MCF 10A (cell line): ENCODE measurements at regions of chr19 and their contacts with region 1.

Region 1: GRCh38 chr19:49127674-49128544 is 8.6 kb downstream of the PPFIA3 start:
- DNase-seq: peak; percentile 99
- H3K4me3 Mint-ChIP-seq: peak overlapping the region; percentile 70
- H3K27ac Mint-ChIP-seq: peak overlapping the region; percentile 25
- H3K4me1 Mint-ChIP-seq: peaks cover 10% of the 10 kb centered on the region
- H3K27me3 Mint-ChIP-seq: no peaks in the 10 kb centered on the region
- CTCF ChIP-seq: no peak

Region 2: DNA sequence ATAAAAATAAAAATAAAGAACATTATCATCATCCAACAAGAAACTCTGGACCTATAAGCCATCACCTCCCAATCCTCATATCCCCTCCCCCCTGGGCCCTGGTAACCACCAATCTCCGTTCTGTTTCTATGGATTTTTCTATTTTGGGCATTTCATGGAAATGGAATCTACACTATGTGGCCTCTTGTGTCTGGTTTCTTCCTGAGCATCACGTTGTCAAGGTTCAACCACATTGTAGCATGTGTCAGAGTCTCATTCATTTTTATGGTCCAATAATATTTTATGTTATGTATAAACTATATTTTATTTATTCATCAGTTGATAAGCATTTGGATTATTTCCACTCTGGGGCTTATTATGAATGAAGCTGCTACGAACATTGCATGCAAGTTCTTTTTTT is 549.0 kb before region 1 on chr19:
- CTCF ChIA-PET with region 1: no interaction called
- POLR2A ChIA-PET with region 1: no interaction called
- intact Hi-C with region 1: no loop called
- DNase-seq: no peak
- H3K4me3 Mint-ChIP-seq: no peak overlapping the region
- H3K27ac Mint-ChIP-seq: no peak overlapping the region
- H3K4me1 Mint-ChIP-seq: peaks cover 6% of the 10 kb centered on the region
- H3K27me3 Mint-ChIP-seq: no peaks in the 10 kb centered on the region
- CTCF ChIP-seq: no peak

Region 3: DNA sequence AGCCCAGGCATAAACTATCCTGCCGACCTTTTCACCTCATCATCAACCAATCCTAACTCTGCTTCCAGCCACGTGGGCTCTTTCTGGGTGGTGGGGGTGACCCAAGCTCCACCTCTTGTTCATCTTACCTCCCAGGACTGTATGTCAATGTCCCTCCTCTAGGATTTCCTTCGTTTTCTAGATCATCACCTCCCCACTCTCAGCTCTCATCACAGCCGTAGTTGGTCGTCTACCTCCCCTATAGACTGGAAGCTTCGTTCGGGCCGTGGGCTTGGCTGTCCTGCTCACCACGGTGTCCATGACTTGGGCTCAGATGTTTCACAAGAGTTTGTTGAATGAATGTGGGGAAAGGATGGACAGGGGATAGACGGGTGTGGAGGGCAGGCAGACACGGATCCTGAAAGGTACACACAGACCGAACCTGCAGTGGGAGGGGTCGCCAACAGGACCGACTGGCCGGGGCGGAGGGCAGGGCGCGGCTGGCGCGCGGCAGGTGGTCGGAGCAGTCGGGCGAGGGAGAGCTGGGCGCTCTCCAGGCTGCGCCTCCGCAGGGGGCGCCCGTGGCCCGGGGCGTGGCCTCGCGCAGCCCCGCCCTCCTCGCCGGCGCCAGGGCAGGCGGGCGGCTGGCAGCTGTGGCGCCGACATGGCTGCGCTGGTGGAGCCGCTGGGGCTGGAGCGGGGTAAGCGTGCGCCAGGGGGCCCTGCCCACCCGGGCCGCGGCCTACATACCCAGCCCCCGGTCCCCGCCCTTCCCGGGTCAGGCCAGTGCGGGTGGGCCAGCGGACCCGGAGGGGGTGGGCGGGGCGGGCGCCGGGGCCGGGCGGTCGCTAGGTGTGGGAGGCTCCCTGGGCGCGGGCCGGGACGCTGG is 13.9 kb before region 1 on chr19 and contains the start of gene LIN7B:
- CTCF ChIA-PET with region 1: interaction called, 11 read pairs
- POLR2A ChIA-PET with region 1: interaction called, 8 read pairs
- intact Hi-C with region 1: no loop called
- DNase-seq: peak; percentile 62
- H3K4me3 Mint-ChIP-seq: peak within 1 kb of the TSS; percentile 73
- H3K27ac Mint-ChIP-seq: no peak within 1 kb of the TSS
- H3K4me1 Mint-ChIP-seq: peaks cover 34% of the 10 kb centered on the region
- H3K27me3 Mint-ChIP-seq: no peaks in the 10 kb centered on the region
- CTCF ChIP-seq: peak; percentile 30
- total RNA-seq, gene LIN7B: 2.6 and 3.2 TPM in 2 replicates

Region 4: GRCh38 chr19:49142866-49143335 is 15.0 kb after region 1 on chr19:
- CTCF ChIA-PET with region 1: interaction called, 6 read pairs
- POLR2A ChIA-PET with region 1: interaction called, 19 read pairs
- intact Hi-C with region 1: no loop called
- DNase-seq: peak; percentile 96
- H3K4me3 Mint-ChIP-seq: peak overlapping the region; percentile 85
- H3K27ac Mint-ChIP-seq: peak overlapping the region; percentile 53
- H3K4me1 Mint-ChIP-seq: peaks cover 19% of the 10 kb centered on the region
- H3K27me3 Mint-ChIP-seq: no peaks in the 10 kb centered on the region
- CTCF ChIP-seq: no peak

Region 5: DNA sequence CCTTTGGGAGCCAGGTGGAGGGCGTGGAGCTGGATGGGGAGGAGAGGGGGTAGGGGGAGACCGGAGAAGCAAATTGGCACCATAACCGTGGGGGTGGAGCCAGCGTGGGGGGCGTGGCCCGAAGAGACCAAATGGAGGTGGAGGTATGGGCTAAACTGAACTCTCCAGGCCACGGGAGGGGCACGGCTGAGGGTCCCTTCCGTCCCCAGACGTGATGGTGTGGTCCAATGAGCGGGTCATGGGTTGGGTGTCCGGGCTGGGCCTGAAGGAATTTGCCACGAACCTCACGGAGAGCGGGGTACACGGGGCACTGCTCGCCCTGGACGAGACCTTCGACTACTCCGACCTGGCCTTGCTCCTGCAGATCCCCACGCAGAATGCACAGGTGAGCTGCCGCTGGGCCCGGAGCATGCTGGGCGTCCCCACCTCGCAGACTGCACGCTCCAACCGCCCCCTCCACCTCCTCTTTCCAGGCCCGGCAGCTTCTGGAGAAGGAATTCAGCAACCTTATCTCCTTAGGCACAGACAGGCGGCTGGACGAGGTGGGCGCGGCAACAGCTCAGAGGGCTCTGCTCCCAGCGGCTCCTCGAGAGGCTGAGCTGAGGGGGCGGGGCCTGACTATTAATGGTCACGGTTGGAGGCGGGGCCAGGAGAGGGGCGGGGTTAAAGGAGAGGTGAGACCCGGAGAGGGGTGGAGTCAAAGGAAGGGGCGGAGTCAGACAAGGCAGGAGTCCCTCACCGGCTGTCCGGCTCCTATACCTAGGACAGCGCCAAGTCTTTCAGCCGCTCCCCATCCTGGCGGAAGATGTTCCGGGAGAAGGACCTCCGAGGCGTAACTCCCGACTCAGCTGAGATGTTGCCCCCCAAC is 21.1 kb after region 1 on chr19:
- CTCF ChIA-PET with region 1: interaction called, 6 read pairs
- POLR2A ChIA-PET with region 1: interaction called, 19 read pairs
- intact Hi-C with region 1: no loop called
- DNase-seq: peak; percentile 98
- H3K4me3 Mint-ChIP-seq: peak overlapping the region; percentile 82
- H3K27ac Mint-ChIP-seq: peak overlapping the region; percentile 52
- H3K4me1 Mint-ChIP-seq: peaks cover 17% of the 10 kb centered on the region
- H3K27me3 Mint-ChIP-seq: no peaks in the 10 kb centered on the region
- CTCF ChIP-seq: no peak